PC-3 (cell line): ENCODE measurements at regions of chr3 and their contacts with region 1.

Region 1: GRCh38 chr3:28124882-28125281 is 116.5 kb upstream of the CMC1 start:
- DNase-seq: no peak
- ATAC-seq: no peak; the same call in 1 of the 2 replicates
- H3K4me3 ChIP-seq: no peak overlapping the region
- H3K27ac ChIP-seq: no peak overlapping the region
- H3K4me1 ChIP-seq: no peaks in the 10 kb centered on the region
- H3K27me3 ChIP-seq: no peaks in the 10 kb centered on the region
- CTCF ChIP-seq: no peak

Region 2: DNA sequence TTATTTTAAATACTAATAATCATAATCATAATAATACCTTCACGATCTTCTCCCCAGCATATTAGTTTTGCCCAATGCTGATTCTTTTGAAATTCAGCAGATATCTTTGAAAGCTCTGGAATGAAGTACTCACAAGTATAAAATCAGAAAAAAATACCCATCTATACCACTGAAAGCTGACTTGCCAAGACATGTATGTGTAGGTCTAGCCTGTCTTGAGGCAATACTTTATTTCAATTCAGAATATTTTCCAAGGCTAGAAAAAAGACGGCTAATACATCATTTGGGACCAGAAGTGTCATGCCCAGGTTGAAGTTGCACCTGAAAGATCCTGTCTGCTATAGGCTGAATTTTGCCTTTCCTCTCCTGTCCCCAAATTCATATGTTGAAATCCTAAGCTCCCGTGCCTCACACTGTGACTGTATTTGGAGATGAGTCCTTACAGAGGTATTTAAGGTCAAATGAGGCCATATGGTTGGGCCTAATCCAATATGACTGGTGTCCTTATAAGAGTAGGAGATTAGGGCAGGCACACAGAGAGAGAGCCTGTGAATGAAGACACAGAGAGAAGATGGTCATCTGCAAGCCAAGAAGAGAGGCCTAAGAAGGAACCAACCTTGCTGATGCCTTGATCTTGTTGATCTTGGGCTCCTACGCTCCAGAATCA is 139.4 kb before region 1 on chr3:
- CTCF ChIA-PET with region 1: no interaction called
- POLR2A ChIA-PET with region 1: no interaction called
- intact Hi-C with region 1: no loop called
- DNase-seq: peak; percentile 19
- ATAC-seq: no peak
- H3K4me3 ChIP-seq: no peak overlapping the region
- H3K27ac ChIP-seq: no peak overlapping the region
- H3K4me1 ChIP-seq: no peaks in the 10 kb centered on the region
- H3K27me3 ChIP-seq: no peaks in the 10 kb centered on the region
- CTCF ChIP-seq: no peak

Region 3: GRCh38 chr3:28022916-28023315 is 102.0 kb before region 1 on chr3:
- CTCF ChIA-PET with region 1: no interaction called
- POLR2A ChIA-PET with region 1: no interaction called
- intact Hi-C with region 1: loop called (anchors 5 kb)
- DNase-seq: peak; percentile 93
- ATAC-seq: peak; percentile 83
- H3K4me3 ChIP-seq: no peak overlapping the region
- H3K27ac ChIP-seq: peak overlapping the region; percentile 73
- H3K4me1 ChIP-seq: peaks cover 22% of the 10 kb centered on the region
- H3K27me3 ChIP-seq: no peaks in the 10 kb centered on the region
- CTCF ChIP-seq: no peak

Region 4: DNA sequence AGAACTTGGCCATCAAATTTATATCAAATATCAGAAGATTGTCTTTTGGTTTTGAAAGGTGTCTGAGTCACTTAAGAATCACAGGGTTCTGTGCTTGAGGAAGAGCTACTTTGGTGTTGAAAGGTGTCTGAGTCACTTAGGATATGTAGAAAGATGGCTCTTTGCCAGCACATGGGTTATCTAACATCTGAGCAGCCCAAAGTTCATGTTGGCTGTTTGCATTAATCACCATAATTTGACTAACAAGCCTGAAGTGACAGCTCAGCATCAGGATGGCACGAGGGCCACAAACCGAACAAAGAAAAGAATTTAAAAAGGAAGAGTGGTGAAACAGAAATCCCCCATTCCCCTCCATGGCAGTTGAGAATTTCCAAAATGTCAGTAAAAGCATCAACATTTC is 74.0 kb before region 1 on chr3:
- CTCF ChIA-PET with region 1: no interaction called
- POLR2A ChIA-PET with region 1: no interaction called
- intact Hi-C with region 1: loop called (anchors 10 kb)
- DNase-seq: peak; percentile 97
- ATAC-seq: peak; percentile 69
- H3K4me3 ChIP-seq: no peak overlapping the region
- H3K27ac ChIP-seq: peak overlapping the region; percentile 58
- H3K4me1 ChIP-seq: peaks cover 55% of the 10 kb centered on the region
- H3K27me3 ChIP-seq: no peaks in the 10 kb centered on the region
- CTCF ChIP-seq: no peak